CD4-positive, alpha-beta T cell (primary cell): ENCODE measurements at regions of chr14 and their contacts with region 1.

Region 1: DNA sequence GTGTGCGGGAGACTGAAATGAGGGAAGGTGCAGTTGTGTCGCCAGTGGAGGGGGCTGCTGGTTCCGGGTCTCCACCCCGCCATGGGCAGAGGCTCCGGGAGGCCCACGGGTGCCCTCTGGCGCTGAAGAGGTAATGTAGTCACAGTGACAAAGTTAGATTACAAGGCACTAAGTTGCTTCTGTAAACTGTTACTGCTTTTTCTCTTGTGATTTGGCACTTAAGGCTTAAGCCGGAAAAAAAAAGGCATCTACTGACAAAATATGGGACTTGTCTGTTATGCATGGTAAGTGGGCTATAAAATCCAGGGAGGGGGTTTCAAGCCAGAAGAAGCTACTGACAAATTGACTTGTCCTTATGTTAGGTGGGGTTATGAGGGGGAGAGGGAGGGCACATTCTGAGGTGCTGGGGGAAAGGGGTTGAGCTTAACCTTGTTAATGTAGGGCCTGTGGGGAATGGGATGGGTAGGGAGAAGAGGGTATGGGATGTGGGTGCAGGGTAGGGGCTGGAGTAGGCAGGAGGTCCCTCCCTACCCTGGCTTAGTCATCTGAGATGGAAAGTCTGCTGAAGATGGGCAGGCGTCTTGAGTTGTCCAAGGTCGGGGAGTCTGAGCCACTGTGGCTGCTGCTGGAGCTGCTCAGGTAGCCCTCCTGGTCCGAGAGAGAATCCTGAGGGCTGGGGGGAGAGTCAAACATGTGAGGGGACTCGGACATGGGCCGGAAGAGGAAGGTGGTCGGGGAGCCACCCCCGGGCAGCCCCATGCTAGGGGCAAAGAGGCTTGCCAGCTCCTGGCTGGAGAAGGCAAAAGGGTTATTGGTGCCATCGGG is 3.7 kb downstream of the ZFP36L1 start:
- DNase-seq: peak; percentile 81 to 94 (median 88)
- ATAC-seq: peak; percentile 44
- H3K4me3 ChIP-seq: peak overlapping the region; percentile 98
- H3K4me3 Mint-ChIP-seq: peak overlapping the region; percentile 92
- H3K27ac ChIP-seq: peak overlapping the region; percentile 67 to 100
- H3K27ac Mint-ChIP-seq: peak overlapping the region; percentile 99
- H3K4me1 ChIP-seq: peaks cover 58% of the 10 kb centered on the region
- H3K4me1 Mint-ChIP-seq: peaks cover 63% of the 10 kb centered on the region
- H3K27me3 ChIP-seq: no peaks in the 10 kb centered on the region
- H3K27me3 Mint-ChIP-seq: no peaks in the 10 kb centered on the region
- CTCF ChIP-seq: peak; percentile 82

Region 2: GRCh38 chr14:68283378-68284123 is 505.7 kb before region 1 on chr14:
- CTCF ChIA-PET with region 1: interaction called, 6 read pairs
- POLR2A ChIA-PET with region 1: interaction called, 107 read pairs
- intact Hi-C with region 1: loop called in 1 of 2 experiments (anchors 10 kb)
- DNase-seq: peak; percentile 47 to 86 (median 66)
- ATAC-seq: peak; percentile 73
- H3K4me3 ChIP-seq: no peak overlapping the region
- H3K4me3 Mint-ChIP-seq: peak overlapping the region; percentile 56
- H3K27ac ChIP-seq: peak overlapping the region; percentile 76 to 88
- H3K27ac Mint-ChIP-seq: peak overlapping the region; percentile 99
- H3K4me1 ChIP-seq: peaks cover 62% of the 10 kb centered on the region
- H3K4me1 Mint-ChIP-seq: peaks cover 94% of the 10 kb centered on the region
- H3K27me3 ChIP-seq: no peaks in the 10 kb centered on the region
- H3K27me3 Mint-ChIP-seq: no peaks in the 10 kb centered on the region
- CTCF ChIP-seq: peak; percentile 23

Region 3: DNA sequence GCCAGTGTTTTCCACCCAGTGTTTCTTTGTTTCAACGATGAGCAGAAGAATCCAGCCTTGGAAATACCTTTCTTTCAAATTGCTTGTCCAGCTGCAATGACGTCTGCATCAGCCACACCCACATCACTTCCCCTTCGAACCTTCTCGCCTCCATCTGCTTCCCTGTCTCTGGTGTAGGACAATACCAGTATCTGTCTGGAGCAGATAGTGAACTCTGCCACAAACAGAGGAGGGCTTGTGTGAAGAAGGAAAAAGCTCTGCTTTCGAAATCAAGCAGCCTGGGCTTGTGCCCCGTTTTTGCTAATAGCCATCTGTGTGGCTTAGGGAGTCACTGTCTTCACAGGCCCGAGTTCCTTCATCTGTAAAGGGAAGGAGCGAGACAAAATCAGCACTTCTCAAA is 411.7 kb before region 1 on chr14:
- CTCF ChIA-PET with region 1: interaction called, 3 read pairs
- POLR2A ChIA-PET with region 1: interaction called, 22 read pairs
- intact Hi-C with region 1: loop called in 1 of 2 experiments (anchors 5 kb)
- DNase-seq: peak in 4 of 14 experiments; percentile 26 to 58 (median 52)
- ATAC-seq: no peak
- H3K4me3 ChIP-seq: no peak overlapping the region
- H3K4me3 Mint-ChIP-seq: peak overlapping the region; percentile 27
- H3K27ac ChIP-seq: peak overlapping the region; percentile 11 to 68
- H3K27ac Mint-ChIP-seq: peak overlapping the region; percentile 67
- H3K4me1 ChIP-seq: peaks cover 28% of the 10 kb centered on the region
- H3K4me1 Mint-ChIP-seq: peaks cover 81% of the 10 kb centered on the region
- H3K27me3 ChIP-seq: no peaks in the 10 kb centered on the region
- H3K27me3 Mint-ChIP-seq: no peaks in the 10 kb centered on the region
- CTCF ChIP-seq: no peak

Region 4: GRCh38 chr14:68482772-68483395 is 306.3 kb before region 1 on chr14:
- CTCF ChIA-PET with region 1: interaction called, 3 read pairs
- POLR2A ChIA-PET with region 1: interaction called, 11 read pairs
- intact Hi-C with region 1: no loop called
- DNase-seq: no peak
- ATAC-seq: no peak
- H3K4me3 ChIP-seq: no peak overlapping the region
- H3K4me3 Mint-ChIP-seq: peak overlapping the region; percentile 35
- H3K27ac ChIP-seq: peak overlapping the region in 1 of 2 donors; percentile 34
- H3K27ac Mint-ChIP-seq: peak overlapping the region; percentile 94
- H3K4me1 ChIP-seq: peaks cover 42% of the 10 kb centered on the region
- H3K4me1 Mint-ChIP-seq: peaks cover 69% of the 10 kb centered on the region
- H3K27me3 ChIP-seq: no peaks in the 10 kb centered on the region
- H3K27me3 Mint-ChIP-seq: no peaks in the 10 kb centered on the region
- CTCF ChIP-seq: no peak

Region 5: DNA sequence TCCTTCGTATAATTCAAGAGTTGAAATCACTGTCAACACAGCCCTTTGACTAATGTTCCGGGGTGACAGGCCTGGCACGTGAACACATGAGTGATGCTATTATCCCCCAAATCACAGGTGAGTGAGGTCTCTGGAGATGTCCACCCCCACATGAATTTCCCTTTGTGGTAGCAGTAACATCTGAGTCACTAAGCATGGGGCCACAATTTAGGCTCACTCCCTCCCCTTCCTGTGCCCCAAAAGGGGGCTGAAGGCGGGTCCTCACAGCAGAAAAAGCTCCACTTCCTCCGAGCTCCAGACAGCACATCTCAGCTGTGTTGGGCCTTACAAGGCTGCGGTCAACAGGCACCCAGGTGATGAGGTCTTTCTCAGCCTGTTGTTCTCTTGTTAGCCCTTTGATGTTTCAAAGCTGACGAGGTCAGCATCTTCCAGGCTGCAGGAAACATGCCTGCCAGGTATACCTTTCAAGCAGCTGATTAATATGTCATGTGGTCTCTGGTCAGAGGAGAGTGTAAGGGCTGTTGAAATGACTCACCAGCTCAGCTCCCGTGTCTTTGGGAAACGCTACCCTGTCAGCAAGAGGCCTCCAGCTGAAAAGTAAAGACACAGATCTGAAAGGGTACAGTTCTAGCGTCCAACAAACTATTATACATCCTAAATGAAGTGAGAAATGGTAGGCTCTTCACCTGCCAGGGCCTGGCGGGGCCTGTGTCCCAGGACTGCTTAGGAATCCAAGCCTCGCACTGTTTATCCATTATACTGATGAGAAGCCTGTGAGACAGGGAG is 103.6 kb before region 1 on chr14:
- CTCF ChIA-PET with region 1: interaction called, 12 read pairs
- POLR2A ChIA-PET with region 1: interaction called, 23 read pairs
- intact Hi-C with region 1: loop called (anchors 1 to 5 kb)
- DNase-seq: peak; percentile 62 to 96 (median 80)
- ATAC-seq: peak; percentile 84
- H3K4me3 ChIP-seq: no peak overlapping the region
- H3K4me3 Mint-ChIP-seq: peak overlapping the region; percentile 3
- H3K27ac ChIP-seq: peak overlapping the region; percentile 62 to 87
- H3K27ac Mint-ChIP-seq: peak overlapping the region; percentile 94
- H3K4me1 ChIP-seq: peaks cover 59% of the 10 kb centered on the region
- H3K4me1 Mint-ChIP-seq: peaks cover 70% of the 10 kb centered on the region
- H3K27me3 ChIP-seq: no peaks in the 10 kb centered on the region
- H3K27me3 Mint-ChIP-seq: no peaks in the 10 kb centered on the region
- CTCF ChIP-seq: no peak

Region 6: DNA sequence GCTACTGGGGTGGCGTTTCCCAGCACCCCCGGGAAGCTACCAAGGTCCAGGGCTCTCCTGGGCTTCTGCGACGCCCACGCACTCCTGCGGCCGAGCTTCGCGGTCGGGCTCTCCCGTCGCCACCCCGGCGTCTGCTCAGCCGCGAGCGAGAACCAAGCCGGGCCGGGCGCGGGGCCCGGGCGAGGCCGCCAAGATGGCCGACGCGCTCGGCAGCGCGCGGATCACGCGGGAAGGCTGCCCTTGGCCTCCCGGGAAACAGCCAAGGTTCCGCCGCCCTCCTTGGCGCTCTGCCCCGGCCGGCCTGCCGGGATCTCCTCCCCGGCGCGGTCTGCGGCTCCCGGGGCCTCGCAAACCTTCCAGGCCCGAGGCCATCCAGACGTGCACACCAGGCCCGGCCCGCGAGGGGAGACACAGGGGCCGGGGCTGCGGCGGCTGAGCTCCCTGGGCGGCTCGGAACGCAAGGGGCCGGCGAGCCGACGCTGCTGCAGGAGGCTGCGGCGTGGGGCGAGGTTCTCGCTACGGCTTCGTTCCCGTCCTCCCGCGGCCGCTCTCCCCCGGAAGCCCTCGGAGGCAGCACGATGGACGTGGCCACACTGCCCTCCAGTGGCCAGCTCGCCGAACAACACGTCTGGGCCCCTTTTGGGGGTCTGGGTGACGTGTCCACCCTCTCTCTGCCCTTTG is 27.2 kb after region 1 on chr14:
- CTCF ChIA-PET with region 1: interaction called, 115 read pairs
- POLR2A ChIA-PET with region 1: interaction called, 816 read pairs
- intact Hi-C with region 1: loop called (anchors 1 to 2 kb)
- DNase-seq: peak; percentile 80 to 94 (median 88)
- ATAC-seq: peak; percentile 62
- H3K4me3 ChIP-seq: peak overlapping the region; percentile 64
- H3K4me3 Mint-ChIP-seq: peak overlapping the region; percentile 91
- H3K27ac ChIP-seq: peak overlapping the region; percentile 92 to 93
- H3K27ac Mint-ChIP-seq: peak overlapping the region; percentile 95
- H3K4me1 ChIP-seq: peaks cover 89% of the 10 kb centered on the region
- H3K4me1 Mint-ChIP-seq: peaks cover 79% of the 10 kb centered on the region
- H3K27me3 ChIP-seq: no peaks in the 10 kb centered on the region
- H3K27me3 Mint-ChIP-seq: no peaks in the 10 kb centered on the region
- CTCF ChIP-seq: peak; percentile 96

Region 7: DNA sequence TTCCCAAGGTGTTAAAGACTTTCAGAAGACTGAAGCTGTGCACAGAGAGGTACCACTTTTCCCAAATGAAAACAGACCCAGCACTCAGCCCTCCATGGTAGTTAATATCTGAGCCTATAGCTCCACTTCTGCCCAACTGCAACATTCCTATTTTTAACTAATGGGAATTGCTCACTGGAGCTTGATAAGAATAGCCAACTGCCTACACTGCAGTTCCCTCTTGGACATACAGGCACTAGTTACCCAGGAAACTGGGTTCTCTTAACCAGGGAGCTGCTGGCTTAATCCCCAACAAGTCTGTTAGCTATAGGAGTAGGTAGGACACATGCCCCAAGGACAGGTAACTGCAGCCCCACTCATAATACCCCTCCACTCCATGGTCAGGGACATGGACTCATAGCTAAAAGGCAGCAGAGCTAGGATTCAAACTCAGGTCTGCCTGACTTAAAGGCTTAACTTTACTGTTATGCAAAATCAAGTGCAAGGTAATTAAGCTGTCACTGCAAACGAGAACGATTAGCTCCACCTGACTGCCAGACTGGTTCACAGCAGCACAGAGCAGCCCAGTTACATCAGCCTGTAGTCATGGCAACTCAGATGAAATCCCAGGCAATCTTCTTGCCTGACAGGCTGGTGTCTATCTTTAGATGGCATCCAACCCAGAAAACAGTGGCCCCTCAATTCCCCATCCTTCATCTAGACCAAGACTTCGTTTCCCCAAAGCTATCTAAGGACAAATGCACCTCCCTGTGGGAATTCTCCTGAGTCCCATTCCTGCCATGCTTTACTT is 267.0 kb after region 1 on chr14:
- CTCF ChIA-PET with region 1: no interaction called
- POLR2A ChIA-PET with region 1: no interaction called
- intact Hi-C with region 1: no loop called
- DNase-seq: peak in 3 of 14 experiments; percentile 16 to 45 (median 34)
- ATAC-seq: peak; percentile 86
- H3K4me3 ChIP-seq: no peak overlapping the region
- H3K4me3 Mint-ChIP-seq: no peak overlapping the region
- H3K27ac ChIP-seq: no peak overlapping the region
- H3K27ac Mint-ChIP-seq: peak overlapping the region; percentile 54
- H3K4me1 ChIP-seq: no peaks in the 10 kb centered on the region
- H3K4me1 Mint-ChIP-seq: peaks cover 8% of the 10 kb centered on the region
- H3K27me3 ChIP-seq: no peaks in the 10 kb centered on the region
- H3K27me3 Mint-ChIP-seq: no peaks in the 10 kb centered on the region
- CTCF ChIP-seq: no peak